Endothelial cell of umbilical vein (primary cell): ENCODE measurements at regions of chr2 and their contacts with region 1.

Region 1: GRCh38 chr2:38581193-38582147 is 21.3 kb downstream of the HNRNPLL start:
- DNase-seq: peak; percentile 74
- H3K4me3 ChIP-seq: no peak overlapping the region
- H3K27ac ChIP-seq: no peak overlapping the region
- H3K4me1 ChIP-seq: no peaks in the 10 kb centered on the region
- H3K27me3 ChIP-seq: no peaks in the 10 kb centered on the region
- CTCF ChIP-seq: peak; percentile 49 to 53
- POLR2A ChIP-seq: no peak

Region 2: DNA sequence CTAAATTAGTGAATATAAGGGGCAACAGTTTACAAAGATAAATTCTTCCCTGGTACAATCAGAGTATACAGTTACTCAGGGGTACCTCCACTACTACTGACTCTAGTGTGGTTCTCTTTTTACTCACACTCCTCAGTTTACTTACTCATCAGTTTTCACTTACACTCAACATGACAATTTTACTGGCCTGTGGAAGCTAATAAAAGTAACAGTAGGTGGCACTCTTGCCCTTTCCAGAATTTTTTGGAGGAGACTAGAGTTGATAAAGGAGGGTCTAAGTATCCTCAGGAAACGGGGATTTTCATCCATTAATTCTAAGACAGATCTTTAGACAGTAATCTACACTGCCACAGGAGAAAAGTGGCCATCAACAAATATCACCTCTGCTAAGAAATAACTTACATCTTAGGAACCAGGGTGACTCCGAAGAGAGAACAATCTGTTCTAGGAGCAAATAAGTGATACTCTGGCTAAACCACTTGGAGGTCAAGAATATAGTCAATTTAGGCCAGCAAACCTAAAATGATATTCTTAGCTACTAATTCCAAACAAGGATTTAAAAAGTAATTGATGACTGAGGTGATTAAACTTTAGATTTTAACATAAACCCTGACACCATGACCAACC is 265.6 kb before region 1 on chr2:
- CTCF ChIA-PET with region 1: interaction called, 20 read pairs
- POLR2A ChIA-PET with region 1: no interaction called
- dilution Hi-C with region 1: no loop called
- intact Hi-C with region 1: loop called (anchors 5 kb)
- DNase-seq: peak; percentile 67
- H3K4me3 ChIP-seq: no peak overlapping the region
- H3K27ac ChIP-seq: no peak overlapping the region
- H3K4me1 ChIP-seq: no peaks in the 10 kb centered on the region
- H3K27me3 ChIP-seq: no peaks in the 10 kb centered on the region
- CTCF ChIP-seq: peak; percentile 38 to 41
- POLR2A ChIP-seq: no peak

Region 3: GRCh38 chr2:38561691-38562090 is 19.8 kb before region 1 on chr2:
- CTCF ChIA-PET with region 1: interaction called, 45 read pairs
- POLR2A ChIA-PET with region 1: interaction called, 5 read pairs
- dilution Hi-C with region 1: no loop called
- intact Hi-C with region 1: no loop called
- DNase-seq: no peak
- H3K4me3 ChIP-seq: no peak overlapping the region
- H3K27ac ChIP-seq: no peak overlapping the region
- H3K4me1 ChIP-seq: no peaks in the 10 kb centered on the region
- H3K27me3 ChIP-seq: no peaks in the 10 kb centered on the region
- CTCF ChIP-seq: no peak
- POLR2A ChIP-seq: no peak

Region 4: DNA sequence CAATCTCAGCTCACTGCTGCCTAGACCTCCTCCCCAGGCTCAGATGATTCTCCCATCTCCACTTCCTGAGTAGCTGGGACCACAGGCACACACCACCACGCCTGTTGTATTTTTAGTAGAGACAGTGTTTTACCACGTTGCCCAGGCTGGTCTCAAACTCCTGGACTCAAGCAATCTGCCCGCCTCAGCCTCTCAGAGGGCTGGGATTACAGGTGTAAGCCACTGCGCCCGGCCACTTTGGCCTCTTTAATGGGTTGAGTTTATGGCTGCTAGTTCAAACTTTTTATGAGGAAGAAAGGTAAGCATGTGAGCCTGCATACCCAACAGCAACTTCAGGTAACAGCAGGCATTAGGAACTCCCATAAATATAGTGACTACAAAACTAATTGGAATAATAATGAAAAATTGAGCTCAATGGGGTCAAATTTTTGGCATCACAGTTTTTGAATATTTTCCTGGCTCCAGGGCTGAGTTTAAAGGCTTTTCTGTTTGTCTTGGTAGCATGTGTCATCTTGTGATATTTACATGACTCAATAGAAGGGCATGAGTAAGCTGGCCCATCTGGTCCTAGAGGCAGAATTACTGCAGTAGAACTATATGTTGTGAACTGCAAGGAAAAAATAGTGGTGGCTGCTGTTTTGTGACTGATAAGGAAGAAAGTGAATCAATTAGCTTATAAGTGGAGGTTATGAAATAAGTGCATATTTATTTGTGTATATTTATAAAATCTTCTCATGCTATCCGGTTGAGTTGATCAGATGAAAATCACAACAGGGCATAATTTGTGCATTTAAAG is 109.2 kb after region 1 on chr2:
- CTCF ChIA-PET with region 1: interaction called, 13 read pairs
- POLR2A ChIA-PET with region 1: no interaction called
- dilution Hi-C with region 1: no loop called
- intact Hi-C with region 1: no loop called
- DNase-seq: peak; percentile 87
- H3K4me3 ChIP-seq: no peak overlapping the region
- H3K27ac ChIP-seq: peak overlapping the region; percentile 69
- H3K4me1 ChIP-seq: peaks cover 12% of the 10 kb centered on the region
- H3K27me3 ChIP-seq: no peaks in the 10 kb centered on the region
- CTCF ChIP-seq: no peak
- POLR2A ChIP-seq: no peak

Region 5: DNA sequence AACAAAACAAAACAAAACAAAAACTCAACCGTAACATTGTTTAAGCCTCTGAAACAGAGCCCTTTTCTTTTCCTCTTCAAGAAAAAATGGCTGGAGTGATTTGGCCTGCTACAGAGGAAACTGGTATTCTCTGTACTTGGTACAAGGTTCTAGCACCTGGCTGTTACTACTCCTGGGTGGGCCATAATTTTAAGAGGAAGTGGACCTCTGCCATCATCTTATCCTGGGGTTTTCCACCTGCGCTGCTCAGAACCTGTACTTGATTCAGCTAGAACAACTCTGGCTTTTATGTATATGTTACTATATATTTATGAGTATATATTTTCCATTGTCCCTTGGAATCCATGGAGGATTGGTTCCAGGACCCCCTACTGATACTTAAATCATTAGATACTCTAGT is 147.2 kb after region 1 on chr2:
- CTCF ChIA-PET with region 1: interaction called, 58 read pairs
- POLR2A ChIA-PET with region 1: no interaction called
- dilution Hi-C with region 1: no loop called
- intact Hi-C with region 1: loop called (anchors 1 kb)
- DNase-seq: no peak
- H3K4me3 ChIP-seq: no peak overlapping the region
- H3K27ac ChIP-seq: no peak overlapping the region
- H3K4me1 ChIP-seq: no peaks in the 10 kb centered on the region
- H3K27me3 ChIP-seq: no peaks in the 10 kb centered on the region
- CTCF ChIP-seq: no peak
- POLR2A ChIP-seq: no peak

Region 6: GRCh38 chr2:38740851-38741731 is 159.6 kb after region 1 on chr2:
- CTCF ChIA-PET with region 1: interaction called, 40 read pairs
- POLR2A ChIA-PET with region 1: no interaction called
- dilution Hi-C with region 1: no loop called
- intact Hi-C with region 1: loop called (anchors 1 kb)
- DNase-seq: peak; percentile 62
- H3K4me3 ChIP-seq: no peak overlapping the region
- H3K27ac ChIP-seq: no peak overlapping the region
- H3K4me1 ChIP-seq: no peaks in the 10 kb centered on the region
- H3K27me3 ChIP-seq: no peaks in the 10 kb centered on the region
- CTCF ChIP-seq: peak; percentile 12 to 29
- POLR2A ChIP-seq: peak; percentile 13